Activated T-helper 1 cell treated with anti-CD3 and anti-CD28 coated beads, Interleukin-12 subunit alpha, Interleukin-12 subunit beta, Interleukin-2, Interleukin-4 antibody, amounts not matched to agents 30 ng/mL and 10 ng/mL and 1 ng/mL, durations not matched to agents 14 hours and 24 hours and 36 hours (primary cell): ENCODE measurements at regions of chr16 and their contacts with region 1.

Region 1: DNA sequence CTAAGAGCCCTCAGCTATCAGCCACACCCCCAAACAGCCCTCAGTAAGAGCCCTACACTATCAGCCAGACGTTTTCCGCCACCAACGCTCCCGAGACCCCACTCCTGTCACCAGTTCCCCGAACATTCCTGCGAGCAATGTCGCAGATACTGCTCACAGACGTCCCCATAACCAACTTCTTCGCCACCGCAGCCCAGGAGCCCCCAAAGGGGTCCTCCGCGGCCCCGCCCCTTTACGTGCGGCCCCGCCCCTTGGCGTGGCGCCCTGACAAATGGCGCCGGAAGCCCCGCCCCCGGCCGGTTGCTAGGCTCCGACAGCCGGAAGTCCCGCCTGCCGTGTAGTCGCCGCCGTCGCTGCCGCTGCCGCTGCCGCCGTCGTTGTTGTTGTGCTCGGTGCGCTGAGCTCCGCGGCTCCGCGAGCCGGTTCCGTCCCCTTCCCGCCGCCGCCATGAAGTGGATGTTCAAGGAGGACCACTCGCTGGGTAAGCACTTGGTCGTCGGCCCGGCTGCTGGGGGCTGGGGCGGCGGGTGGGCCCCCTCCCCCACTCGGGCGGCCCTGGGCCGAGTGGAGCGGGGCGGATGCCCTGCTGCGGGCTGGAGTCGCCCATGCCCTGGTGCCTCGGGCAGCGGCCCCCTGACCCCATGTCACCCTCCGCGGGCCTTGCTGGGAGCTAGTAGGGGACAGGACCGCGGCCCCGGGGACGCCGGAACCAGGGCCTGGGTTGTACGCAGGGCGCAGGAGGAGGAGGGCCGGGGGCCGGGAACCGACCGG is at the start of gene GABARAPL2:
- DNase-seq: peak; percentile 87
- H3K4me3 Mint-ChIP-seq: peak within 1 kb of the TSS; percentile 99
- H3K27ac Mint-ChIP-seq: peak within 1 kb of the TSS; percentile 90
- H3K4me1 Mint-ChIP-seq: peaks cover 28% of the 10 kb centered on the region
- H3K27me3 Mint-ChIP-seq: peaks cover 5% of the 10 kb centered on the region
- total RNA-seq, gene GABARAPL2: 62.7 and 69.5 TPM in 2 replicates

Region 2: DNA sequence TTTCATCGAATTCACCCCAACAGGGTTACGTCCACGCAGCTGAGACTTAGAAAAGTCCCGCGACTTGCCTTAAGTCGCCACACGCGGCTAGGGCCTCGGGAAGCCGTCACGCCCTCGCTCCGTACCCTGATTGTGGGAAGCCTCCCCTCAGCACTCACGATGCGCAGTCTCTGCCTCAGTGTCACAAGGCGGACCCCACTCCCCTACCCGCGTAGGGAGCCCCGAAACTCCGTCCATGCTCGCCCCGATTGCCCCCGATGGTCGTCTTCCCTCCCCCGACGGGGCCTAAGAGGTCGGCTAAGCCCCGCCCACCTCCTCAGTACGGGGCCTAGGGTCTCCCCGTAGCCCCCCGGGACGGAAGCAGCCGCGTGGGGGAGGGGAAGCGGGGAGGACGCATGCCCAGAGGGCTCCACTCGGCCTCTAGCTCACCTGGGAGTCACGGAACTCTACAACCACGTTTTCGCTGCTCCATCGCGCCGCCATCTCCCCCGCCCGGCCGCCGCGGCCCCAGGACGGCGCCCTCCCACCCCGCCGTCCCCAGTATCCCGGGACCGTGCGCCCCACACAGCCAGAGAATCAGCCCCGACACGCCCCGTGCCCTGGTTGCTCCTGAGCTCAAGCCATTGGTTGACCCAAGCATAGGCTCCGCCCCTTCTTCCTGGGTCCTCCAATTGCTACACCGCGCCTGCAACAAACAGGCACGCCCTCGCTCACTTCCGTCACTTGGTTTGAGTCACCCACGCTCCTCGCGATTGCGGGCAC is 581.5 kb before region 1 on chr16 and contains the start of gene WDR59:
- intact Hi-C with region 1: loop called (anchors 10 kb)
- DNase-seq: peak; percentile 99
- H3K4me3 Mint-ChIP-seq: peak within 1 kb of the TSS; percentile 90
- H3K27ac Mint-ChIP-seq: peak within 1 kb of the TSS; percentile 90
- H3K4me1 Mint-ChIP-seq: peaks cover 14% of the 10 kb centered on the region
- H3K27me3 Mint-ChIP-seq: peaks cover 3% of the 10 kb centered on the region
- total RNA-seq, gene WDR59: 85.9 and 95.3 TPM in 2 replicates

Region 3: GRCh38 chr16:75537776-75538175 is 28.4 kb before region 1 on chr16:
- intact Hi-C with region 1: no loop called
- DNase-seq: no peak
- H3K4me3 Mint-ChIP-seq: no peak overlapping the region
- H3K27ac Mint-ChIP-seq: no peak overlapping the region
- H3K4me1 Mint-ChIP-seq: peaks cover 7% of the 10 kb centered on the region
- H3K27me3 Mint-ChIP-seq: peaks cover 2% of the 10 kb centered on the region

Region 4: DNA sequence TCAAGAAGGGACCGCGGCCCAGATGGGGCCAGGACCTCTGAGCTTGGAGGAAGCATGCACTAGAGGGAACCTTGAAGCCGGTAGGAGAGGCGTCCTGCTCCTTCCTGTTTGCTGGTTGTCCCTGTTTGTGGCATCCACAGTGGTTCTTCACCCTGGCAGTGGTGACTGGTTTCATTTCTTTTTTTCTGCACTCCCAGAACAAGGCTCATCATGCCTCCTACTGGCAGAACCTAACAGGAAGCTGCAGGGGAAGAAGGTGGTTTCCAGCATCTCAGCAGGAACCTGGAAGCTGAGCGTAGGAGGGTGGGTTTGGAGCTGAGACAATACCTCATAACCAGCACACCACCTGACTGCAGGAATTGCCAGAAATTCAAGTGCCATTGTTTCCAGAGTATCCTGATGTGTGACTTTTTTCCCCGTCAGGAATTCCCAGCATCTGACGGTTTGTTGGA is 16.0 kb before region 1 on chr16:
- intact Hi-C with region 1: loop called (anchors 2 kb)
- DNase-seq: peak; percentile 21
- H3K4me3 Mint-ChIP-seq: no peak overlapping the region
- H3K27ac Mint-ChIP-seq: no peak overlapping the region
- H3K4me1 Mint-ChIP-seq: peaks cover 16% of the 10 kb centered on the region
- H3K27me3 Mint-ChIP-seq: peaks cover 4% of the 10 kb centered on the region

Region 5: DNA sequence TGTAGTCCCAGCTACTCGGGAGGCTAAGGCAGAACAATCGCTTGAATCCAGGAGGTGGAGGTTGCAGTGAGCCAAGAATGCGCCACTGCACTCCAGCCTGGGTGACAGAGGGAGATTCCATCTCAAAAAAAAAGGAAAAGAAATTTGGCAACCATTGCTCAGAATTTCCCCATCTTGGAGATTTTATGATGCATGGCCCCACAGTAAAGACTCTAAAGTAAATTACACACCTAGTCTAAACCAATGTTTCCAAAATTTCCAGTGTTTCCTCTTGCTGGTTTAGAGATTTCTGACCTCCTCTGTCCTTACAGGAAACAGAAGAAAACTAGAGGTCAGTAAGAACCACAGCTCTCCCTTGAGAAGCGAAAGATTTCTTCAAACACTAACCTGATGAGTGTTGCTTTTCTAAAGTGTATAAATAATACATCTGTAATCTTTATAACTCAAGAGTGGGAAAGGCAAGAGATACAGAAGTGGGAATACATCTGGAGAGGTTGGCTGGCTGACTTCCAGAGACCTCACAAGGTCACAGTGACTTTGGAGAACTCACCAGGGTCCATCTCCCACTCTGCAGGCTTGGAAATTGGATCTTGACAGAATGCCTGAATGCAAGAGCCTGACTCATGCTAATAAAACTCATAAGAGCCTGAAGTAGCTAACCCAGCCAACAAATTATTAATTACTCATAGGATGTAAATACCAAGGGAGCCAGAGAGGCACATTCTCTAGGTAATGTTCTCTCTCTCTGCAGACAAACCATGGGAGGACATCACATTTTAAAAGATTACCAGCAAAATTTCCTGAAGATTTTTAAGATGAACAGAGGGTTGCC is 48.1 kb after region 1 on chr16:
- intact Hi-C with region 1: no loop called
- DNase-seq: no peak
- H3K4me3 Mint-ChIP-seq: no peak overlapping the region
- H3K27ac Mint-ChIP-seq: no peak overlapping the region
- H3K4me1 Mint-ChIP-seq: peaks cover 20% of the 10 kb centered on the region
- H3K27me3 Mint-ChIP-seq: no peaks in the 10 kb centered on the region

Region 6: DNA sequence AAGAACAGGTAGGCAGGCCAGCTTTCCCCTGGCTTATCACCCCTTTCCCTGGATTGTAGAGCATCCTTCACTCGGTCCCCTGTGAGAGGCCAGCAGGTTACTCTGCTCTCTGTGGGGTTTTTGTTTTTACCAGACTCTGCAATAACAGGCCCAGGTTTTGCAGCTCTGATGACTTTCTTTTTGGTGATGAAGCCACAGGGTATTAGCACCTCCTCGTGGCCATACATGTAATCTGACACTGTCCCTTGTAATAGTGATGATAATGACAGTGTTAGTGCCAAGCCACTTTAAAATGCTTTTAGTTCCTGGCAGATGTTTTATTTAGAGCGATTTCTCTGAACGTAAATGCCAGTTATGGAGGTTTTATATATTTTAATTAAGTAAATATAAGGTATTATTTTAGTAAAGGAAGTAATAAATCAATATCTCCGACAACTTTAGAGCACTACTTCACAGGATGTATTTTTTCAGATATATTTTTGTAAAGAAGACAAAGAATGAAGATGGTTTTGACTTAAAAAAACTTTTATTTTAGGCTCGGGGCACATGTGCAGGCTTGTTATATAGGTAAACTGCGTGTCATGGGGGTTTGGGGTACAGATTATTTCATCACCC is 198.0 kb after region 1 on chr16:
- intact Hi-C with region 1: loop called (anchors 5 kb)
- DNase-seq: peak; percentile 35
- H3K4me3 Mint-ChIP-seq: no peak overlapping the region
- H3K27ac Mint-ChIP-seq: no peak overlapping the region
- H3K4me1 Mint-ChIP-seq: no peaks in the 10 kb centered on the region
- H3K27me3 Mint-ChIP-seq: peaks cover 12% of the 10 kb centered on the region

Region 7: GRCh38 chr16:75947626-75948239 is 381.5 kb after region 1 on chr16:
- intact Hi-C with region 1: no loop called
- DNase-seq: no peak
- H3K4me3 Mint-ChIP-seq: no peak overlapping the region
- H3K27ac Mint-ChIP-seq: no peak overlapping the region
- H3K4me1 Mint-ChIP-seq: no peaks in the 10 kb centered on the region
- H3K27me3 Mint-ChIP-seq: no peaks in the 10 kb centered on the region